ENCODE measurements at regions of chr1 and their contacts with region 1.

Region 1: DNA sequence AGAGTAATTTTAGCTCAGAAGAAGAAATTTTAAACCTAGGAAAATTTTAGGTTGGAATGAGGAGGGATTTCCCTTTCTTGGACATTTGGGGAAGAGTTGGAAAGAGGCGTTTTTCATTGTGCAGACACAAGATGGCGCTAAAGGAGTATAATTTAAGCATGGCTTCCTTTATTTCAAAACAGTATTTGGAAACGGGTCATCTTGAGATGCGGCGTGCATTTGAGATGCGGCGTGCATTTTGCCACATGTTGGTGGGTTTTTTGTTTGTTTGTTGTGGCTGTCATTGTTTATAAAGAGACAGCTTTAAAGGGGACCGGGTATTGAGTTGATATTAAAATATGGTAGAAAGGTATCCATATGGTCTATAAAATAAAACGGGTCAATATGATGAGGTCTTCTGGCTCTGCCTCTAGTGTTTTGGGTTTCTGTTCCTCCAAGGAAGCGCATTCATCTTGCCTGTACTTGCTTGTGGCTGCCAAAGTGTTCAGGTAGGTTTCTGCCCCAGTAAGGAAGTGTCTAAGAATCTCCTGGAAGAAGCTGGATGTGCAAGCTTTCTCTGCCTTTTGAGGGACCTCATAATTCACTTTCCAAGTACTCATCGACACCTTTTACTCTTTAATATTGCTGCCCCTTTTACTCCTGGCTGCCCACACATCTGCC is 210.3 kb downstream of the SLC35F3 start:
- DNase-seq: peak; percentile 19 to 42
- H3K4me3 ChIP-seq: peak overlapping the region; percentile 37; the same call in 1 of the 2 replicates
- H3K27ac ChIP-seq: no peak overlapping the region
- H3K4me1 ChIP-seq: no peaks in the 10 kb centered on the region
- H3K27me3 ChIP-seq: no peaks in the 10 kb centered on the region
- CTCF ChIP-seq: peak; percentile 85

Region 2: GRCh38 chr1:233364695-233365539 is 749.9 kb before region 1 on chr1:
- CTCF ChIA-PET with region 1: interaction called, 9 read pairs
- POLR2A ChIA-PET with region 1: no interaction called
- intact Hi-C with region 1: loop called (anchors 1 kb)
- DNase-seq: peak in 1 of 2 experiments; percentile 36
- H3K4me3 ChIP-seq: no peak overlapping the region
- H3K27ac ChIP-seq: no peak overlapping the region
- H3K4me1 ChIP-seq: peaks cover 26% of the 10 kb centered on the region
- H3K27me3 ChIP-seq: no peaks in the 10 kb centered on the region
- CTCF ChIP-seq: peak; percentile 85

Region 3: GRCh38 chr1:233394860-233395717 is 719.7 kb before region 1 on chr1:
- CTCF ChIA-PET with region 1: interaction called, 19 read pairs
- POLR2A ChIA-PET with region 1: no interaction called
- intact Hi-C with region 1: loop called (anchors 1 kb)
- DNase-seq: peak; percentile 30 to 60
- H3K4me3 ChIP-seq: no peak overlapping the region
- H3K27ac ChIP-seq: no peak overlapping the region
- H3K4me1 ChIP-seq: no peaks in the 10 kb centered on the region
- H3K27me3 ChIP-seq: no peaks in the 10 kb centered on the region
- CTCF ChIP-seq: peak; percentile 89

Region 4: DNA sequence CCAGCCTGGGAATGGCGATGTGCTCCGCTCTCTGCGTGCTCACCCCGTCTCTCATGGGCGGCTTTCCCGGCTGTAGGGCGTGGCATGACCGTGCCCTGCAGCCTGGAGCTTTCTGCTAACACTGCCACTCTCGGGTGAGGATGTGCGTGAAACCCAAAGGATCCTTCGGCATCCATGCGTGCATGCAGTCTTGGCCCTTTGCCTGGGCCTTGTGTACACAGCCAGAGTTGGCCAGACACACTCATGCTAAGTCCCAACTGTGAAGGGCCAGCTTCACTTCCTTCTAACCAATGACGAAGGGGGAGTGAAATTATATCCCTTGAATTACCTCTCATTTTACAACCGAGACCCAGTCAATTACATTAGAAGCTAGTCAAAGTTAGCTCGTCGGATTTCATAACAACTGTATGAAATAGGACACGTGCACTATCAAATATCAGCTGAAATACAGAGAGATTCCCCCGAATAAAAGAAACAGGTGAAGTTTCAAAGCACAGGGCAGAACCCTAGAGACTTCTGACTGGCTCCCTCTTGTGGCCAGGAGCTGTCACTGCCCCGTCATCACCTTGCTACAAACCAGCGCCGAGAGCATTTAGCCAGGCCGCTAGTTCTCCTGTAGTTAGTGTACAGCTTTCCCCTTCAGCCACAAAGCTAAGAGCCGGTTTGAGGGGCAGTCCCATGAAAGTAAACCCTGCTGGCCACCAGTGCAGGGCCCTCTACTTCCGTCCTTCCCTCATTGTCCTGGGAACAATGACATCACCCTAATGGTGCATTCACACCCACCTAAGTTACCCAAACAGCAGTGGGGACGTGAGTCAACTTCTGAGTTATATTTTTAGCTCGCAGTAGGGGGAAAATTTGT is 195.1 kb after region 1 on chr1:
- CTCF ChIA-PET with region 1: no interaction called
- POLR2A ChIA-PET with region 1: no interaction called
- intact Hi-C with region 1: loop called (anchors 1 kb)
- DNase-seq: peak; percentile 58 to 67
- H3K4me3 ChIP-seq: no peak overlapping the region
- H3K27ac ChIP-seq: no peak overlapping the region
- H3K4me1 ChIP-seq: peaks cover 2% of the 10 kb centered on the region
- H3K27me3 ChIP-seq: no peaks in the 10 kb centered on the region
- CTCF ChIP-seq: peak; percentile 92

Region 5: DNA sequence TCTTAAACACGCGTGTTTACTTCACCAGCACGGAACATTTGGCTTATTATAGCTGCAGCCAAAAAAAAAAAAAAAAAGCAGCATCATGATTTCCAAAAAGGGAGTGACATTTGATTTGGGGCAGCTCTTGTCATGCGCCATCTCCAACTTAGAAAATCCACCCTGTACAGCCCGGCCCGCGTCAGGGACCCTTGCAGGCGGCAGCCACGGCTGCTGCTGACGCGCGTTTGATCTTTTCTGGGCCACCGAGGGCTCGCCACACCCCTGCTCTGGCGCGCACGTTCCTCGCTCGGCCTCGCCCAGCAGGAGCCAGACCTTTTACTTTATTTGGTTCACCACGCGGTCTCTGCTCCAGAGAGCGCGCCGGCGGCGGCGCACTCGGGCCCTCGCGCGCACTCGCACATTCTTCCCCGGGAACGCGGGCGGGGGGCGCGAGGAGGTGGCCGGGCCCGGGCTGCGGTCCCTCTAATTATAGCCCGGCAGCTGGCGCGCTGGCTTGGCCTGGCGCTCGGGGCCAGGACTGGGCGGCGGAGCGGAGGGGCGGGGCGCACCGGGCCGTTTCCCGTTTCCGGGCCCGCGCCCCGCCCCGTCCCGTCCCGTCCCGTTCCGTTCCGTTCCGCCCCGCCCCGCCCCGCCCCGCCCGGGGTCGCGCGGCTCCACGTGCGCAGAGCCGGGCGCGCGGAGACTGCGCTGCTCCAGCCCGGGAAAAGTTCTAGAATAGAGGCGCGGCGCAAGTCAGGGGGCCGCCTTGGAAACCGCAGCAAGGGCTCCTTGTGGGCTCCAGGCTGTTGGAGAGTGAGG is 485.0 kb after region 1 on chr1:
- CTCF ChIA-PET with region 1: no interaction called
- POLR2A ChIA-PET with region 1: no interaction called
- intact Hi-C with region 1: loop called (anchors 10 kb)
- DNase-seq: peak; percentile 69 to 89
- H3K4me3 ChIP-seq: peak overlapping the region; percentile 62
- H3K27ac ChIP-seq: peak overlapping the region; percentile 99
- H3K4me1 ChIP-seq: peaks cover 61% of the 10 kb centered on the region
- H3K27me3 ChIP-seq: no peaks in the 10 kb centered on the region
- CTCF ChIP-seq: no peak; the same call in 1 of the 2 replicates

Region 6: DNA sequence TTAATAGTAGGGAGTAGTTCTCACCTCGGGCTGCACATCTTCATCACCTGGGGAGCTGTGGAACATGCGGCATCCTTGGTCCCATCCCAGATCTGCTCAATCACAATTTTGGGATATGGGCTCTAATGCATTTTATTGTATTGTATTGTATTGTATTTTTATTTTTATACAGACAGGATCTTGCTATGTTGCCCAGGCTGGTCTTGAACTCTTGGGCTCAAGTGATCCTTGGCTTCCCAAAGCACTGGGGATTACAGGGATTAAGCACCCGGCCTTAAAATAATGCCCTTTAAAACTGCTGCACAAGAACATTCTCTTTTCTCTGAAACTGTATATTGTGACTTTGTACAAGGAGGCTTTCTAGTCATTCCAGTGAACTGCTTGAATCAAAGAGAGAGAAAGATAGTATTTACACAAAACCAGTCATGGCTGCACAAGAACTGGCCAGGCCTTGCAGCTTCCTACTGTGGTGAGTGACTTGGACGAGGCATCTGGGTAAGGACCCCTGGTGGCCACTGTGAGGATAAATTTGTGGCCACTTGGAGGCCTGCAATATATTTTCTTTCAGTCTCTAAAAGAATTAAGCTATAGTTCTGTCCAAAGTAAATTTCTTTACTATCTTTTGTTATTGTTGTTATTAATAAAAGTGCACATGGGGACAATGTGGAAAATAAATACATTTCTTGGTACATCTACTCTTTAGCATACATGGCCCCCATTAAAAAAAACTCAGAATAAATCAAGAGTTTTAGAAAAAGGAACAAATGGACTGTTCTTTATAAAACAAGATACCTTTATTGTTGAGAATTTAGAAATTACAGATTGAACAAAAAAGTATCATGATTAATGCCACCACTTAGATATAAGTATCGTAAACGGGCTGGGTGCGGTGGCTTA is 1300.5 kb after region 1 on chr1:
- CTCF ChIA-PET with region 1: no interaction called
- POLR2A ChIA-PET with region 1: no interaction called
- intact Hi-C with region 1: loop called (anchors 5 kb)
- DNase-seq: peak; percentile 68 to 69
- H3K4me3 ChIP-seq: no peak overlapping the region
- H3K27ac ChIP-seq: no peak overlapping the region
- H3K4me1 ChIP-seq: 0 out of 2 replicates have a peak, but pooled peaks cover 5% of the 10 kb centered on the region
- H3K27me3 ChIP-seq: no peaks in the 10 kb centered on the region
- CTCF ChIP-seq: peak; percentile 89

Measured in PC-9 (cell line).